Endothelial cell of umbilical vein (primary cell): ENCODE measurements at regions of chr4 and their contacts with region 1.

Region 1: GRCh38 chr4:77994194-77994721 is 62.9 kb upstream of the FRAS1 start:
- DNase-seq: peak; percentile 69
- H3K4me3 ChIP-seq: no peak overlapping the region
- H3K27ac ChIP-seq: no peak overlapping the region
- H3K4me1 ChIP-seq: peaks cover 9% of the 10 kb centered on the region
- H3K27me3 ChIP-seq: peaks cover 0 to 6% of the 10 kb centered on the region in 2 experiments
- CTCF ChIP-seq: peak; percentile 36 to 67
- POLR2A ChIP-seq: no peak

Region 2: DNA sequence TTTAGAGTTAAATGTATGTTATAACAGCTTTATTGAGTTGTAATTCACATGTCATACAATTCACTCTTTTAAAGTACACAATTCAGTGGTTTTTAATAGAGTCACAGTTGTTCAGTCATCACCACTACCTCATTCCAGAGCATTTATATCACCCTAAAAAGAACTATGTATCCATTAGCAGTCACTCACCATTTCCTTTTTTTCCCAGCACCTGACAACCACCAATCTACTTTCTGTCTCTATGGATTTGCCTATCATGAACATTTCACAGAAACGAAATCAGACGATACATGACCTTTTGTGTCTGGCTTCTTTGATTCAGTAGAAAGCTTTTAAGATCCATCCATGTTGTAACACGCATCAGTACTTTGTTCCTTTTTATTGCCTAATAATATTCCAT is 10.0 kb after region 1 on chr4:
- CTCF ChIA-PET with region 1: interaction called, 10 read pairs
- POLR2A ChIA-PET with region 1: no interaction called
- dilution Hi-C with region 1: no loop called
- intact Hi-C with region 1: no loop called
- DNase-seq: no peak
- H3K4me3 ChIP-seq: no peak overlapping the region
- H3K27ac ChIP-seq: no peak overlapping the region
- H3K4me1 ChIP-seq: no peaks in the 10 kb centered on the region
- H3K27me3 ChIP-seq: no peaks in the 10 kb centered on the region
- CTCF ChIP-seq: no peak
- POLR2A ChIP-seq: no peak

Region 3: GRCh38 chr4:78100060-78100459 is 105.8 kb after region 1 on chr4:
- CTCF ChIA-PET with region 1: no interaction called
- POLR2A ChIA-PET with region 1: no interaction called
- dilution Hi-C with region 1: no loop called
- intact Hi-C with region 1: no loop called
- DNase-seq: no peak
- H3K4me3 ChIP-seq: no peak overlapping the region
- H3K27ac ChIP-seq: no peak overlapping the region
- H3K4me1 ChIP-seq: no peaks in the 10 kb centered on the region
- H3K27me3 ChIP-seq: no peaks in the 10 kb centered on the region
- CTCF ChIP-seq: no peak
- POLR2A ChIP-seq: no peak

Region 4: DNA sequence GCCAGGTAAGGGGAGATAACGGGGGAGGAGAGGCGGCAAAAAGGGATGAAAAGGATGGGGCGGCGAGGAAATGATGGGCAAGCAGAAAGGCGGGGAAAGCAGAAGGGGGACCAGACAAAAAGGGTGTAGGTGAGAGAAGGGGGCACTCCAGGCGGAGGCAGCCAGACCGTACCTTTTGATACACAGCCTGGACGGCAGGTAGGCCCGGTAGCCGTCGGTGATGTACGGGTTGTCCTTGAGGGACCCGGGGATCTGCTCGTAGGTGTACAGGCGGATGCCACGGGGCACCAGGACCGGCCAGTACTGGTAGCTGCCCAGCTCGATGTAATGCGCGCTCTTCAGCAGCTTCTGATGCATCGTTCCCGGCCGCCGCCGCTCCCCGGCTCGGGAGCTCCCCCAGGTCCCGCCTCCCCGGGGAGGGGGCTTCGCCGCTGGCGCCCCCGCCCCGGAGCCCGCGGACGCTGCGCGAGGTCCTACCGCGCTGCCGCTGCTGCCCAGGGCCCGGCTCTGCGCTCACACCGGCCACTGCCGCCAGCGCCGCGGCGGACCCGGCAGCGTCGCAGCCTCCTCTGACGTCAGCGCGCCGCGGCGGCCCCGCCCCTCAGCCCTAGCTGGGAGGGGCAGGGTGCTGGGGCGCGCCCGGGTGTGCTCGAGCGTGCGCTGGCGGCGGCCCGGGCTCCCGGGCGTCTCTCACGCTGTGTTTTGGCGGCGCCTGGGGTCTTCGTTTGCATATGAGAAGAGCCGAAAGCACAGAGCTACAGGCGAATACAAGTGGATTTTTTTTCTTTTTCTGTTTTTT is 944.8 kb after region 1 on chr4 and contains the start of gene PAQR3:
- CTCF ChIA-PET with region 1: no interaction called
- POLR2A ChIA-PET with region 1: no interaction called
- dilution Hi-C with region 1: no loop called
- intact Hi-C with region 1: loop called (anchors 2 kb)
- DNase-seq: peak; percentile 82
- H3K4me3 ChIP-seq: peak within 1 kb of the TSS; percentile 56 to 84 (median 62)
- H3K27ac ChIP-seq: peak within 1 kb of the TSS; percentile 4
- H3K4me1 ChIP-seq: peaks cover 13% of the 10 kb centered on the region
- H3K27me3 ChIP-seq: peaks cover 6 to 7% of the 10 kb centered on the region in 2 experiments
- CTCF ChIP-seq: no peak
- POLR2A ChIP-seq: peak; percentile 94
- total RNA-seq, gene PAQR3: 19.0 and 21.0 TPM in 2 replicates